WTC11 (cell line): ENCODE measurements at regions of chr4 and their contacts with region 1.

Region 1: GRCh38 chr4:88514557-88515511 is 8.7 kb downstream of the PYURF start:
- DNase-seq: no peak
- ATAC-seq: no peak
- H3K4me3 Mint-ChIP-seq: no peak overlapping the region
- H3K27ac Mint-ChIP-seq: no peak overlapping the region
- H3K4me1 Mint-ChIP-seq: no peaks in the 10 kb centered on the region
- H3K27me3 Mint-ChIP-seq: no peaks in the 10 kb centered on the region
- CTCF ChIP-seq: no peak

Region 2: GRCh38 chr4:87916626-87917025 is 598.2 kb before region 1 on chr4:
- CTCF ChIA-PET with region 1: no interaction called
- POLR2A ChIA-PET with region 1: no interaction called
- DNase-seq: no peak
- ATAC-seq: peak; percentile 5
- H3K4me3 Mint-ChIP-seq: no peak overlapping the region
- H3K27ac Mint-ChIP-seq: peak overlapping the region; percentile 99
- H3K4me1 Mint-ChIP-seq: peaks cover 78% of the 10 kb centered on the region
- H3K27me3 Mint-ChIP-seq: no peaks in the 10 kb centered on the region
- CTCF ChIP-seq: no peak

Region 3: DNA sequence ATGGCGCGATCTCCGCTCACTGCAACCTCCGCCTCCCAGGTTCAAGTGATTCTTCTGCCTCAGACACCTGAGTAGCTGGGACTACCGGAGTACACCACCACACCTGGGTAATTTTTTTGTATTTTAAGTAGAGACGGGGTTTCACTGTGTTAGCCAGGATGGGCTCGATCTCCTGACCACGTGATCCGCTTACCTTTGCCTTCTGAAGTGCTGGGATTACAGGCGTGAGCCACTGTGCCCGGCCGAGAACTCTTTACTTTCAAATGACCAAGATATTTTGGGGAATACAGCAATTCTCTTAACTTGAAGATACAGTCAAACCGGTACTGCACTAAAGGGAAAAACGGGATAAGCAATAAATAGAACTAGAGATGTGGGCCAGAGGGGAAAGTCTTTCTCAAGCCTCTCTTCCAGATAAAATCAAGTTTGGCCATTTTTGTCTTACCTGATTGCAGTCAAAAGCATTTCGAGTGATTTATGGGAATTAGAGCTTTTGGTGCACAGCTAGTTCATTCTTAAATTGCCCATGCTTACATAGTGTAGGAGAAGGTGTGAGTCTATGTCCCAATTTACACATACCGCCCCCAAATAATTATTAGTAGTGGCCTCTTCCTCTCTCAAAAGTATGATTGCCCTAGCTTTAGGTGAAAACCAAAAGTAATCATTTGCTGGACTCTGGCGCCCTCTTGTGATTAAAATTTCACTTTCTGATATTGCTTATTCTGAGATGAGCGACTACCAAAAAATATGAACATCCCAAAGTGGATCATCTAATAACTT is 303.2 kb before region 1 on chr4:
- CTCF ChIA-PET with region 1: interaction called, 106 read pairs
- POLR2A ChIA-PET with region 1: no interaction called
- DNase-seq: no peak
- ATAC-seq: peak; percentile 70
- H3K4me3 Mint-ChIP-seq: no peak overlapping the region
- H3K27ac Mint-ChIP-seq: peak overlapping the region; percentile 25; the same call in 1 of the 2 replicates
- H3K4me1 Mint-ChIP-seq: peaks cover 2% of the 10 kb centered on the region; the same call in 1 of the 2 replicates
- H3K27me3 Mint-ChIP-seq: no peaks in the 10 kb centered on the region
- CTCF ChIP-seq: peak; percentile 68

Region 4: DNA sequence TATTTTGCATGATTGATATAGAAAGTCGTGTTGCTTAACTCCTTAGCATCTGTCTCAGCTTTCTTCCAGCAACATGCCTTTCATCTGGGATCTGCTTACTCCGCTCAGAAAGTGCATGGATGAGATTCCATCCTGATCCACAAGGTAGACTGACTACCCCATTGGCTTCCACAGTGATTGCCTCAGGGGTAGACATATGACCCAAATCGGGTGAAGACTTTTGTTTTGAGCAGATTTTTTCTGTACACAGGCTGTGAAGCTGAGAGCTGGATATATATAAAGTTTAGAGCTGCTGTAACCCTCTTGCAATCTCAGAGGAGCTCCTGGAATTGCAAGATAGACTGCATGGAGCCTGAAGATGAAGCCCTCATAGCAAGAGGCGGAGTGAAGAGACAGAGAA is 144.9 kb before region 1 on chr4:
- CTCF ChIA-PET with region 1: interaction called, 21 read pairs
- POLR2A ChIA-PET with region 1: no interaction called
- DNase-seq: no peak
- ATAC-seq: no peak
- H3K4me3 Mint-ChIP-seq: no peak overlapping the region
- H3K27ac Mint-ChIP-seq: no peak overlapping the region
- H3K4me1 Mint-ChIP-seq: 0 out of 2 replicates have a peak, but pooled peaks cover 4% of the 10 kb centered on the region
- H3K27me3 Mint-ChIP-seq: no peaks in the 10 kb centered on the region
- CTCF ChIP-seq: no peak

Region 5: GRCh38 chr4:88456757-88457306 is 58.0 kb before region 1 on chr4 and contains the start of gene HERC5:
- CTCF ChIA-PET with region 1: interaction called, 11 read pairs
- POLR2A ChIA-PET with region 1: no interaction called
- DNase-seq: peak; percentile 86
- ATAC-seq: peak; percentile 88
- H3K4me3 Mint-ChIP-seq: peak within 1 kb of the TSS; percentile 90
- H3K27ac Mint-ChIP-seq: peak within 1 kb of the TSS; percentile 98
- H3K4me1 Mint-ChIP-seq: peaks cover 27% of the 10 kb centered on the region
- H3K27me3 Mint-ChIP-seq: peaks cover 29% of the 10 kb centered on the region
- CTCF ChIP-seq: no peak
- total RNA-seq, gene HERC5: 14.3 to 17.2 TPM (median 17.1 TPM) in 3 replicates